CD8-positive, alpha-beta T cell (primary cell): ENCODE measurements at regions of chr19 and their contacts with region 1.

Region 1: GRCh38 chr19:16088351-16089009 is 12.2 kb downstream of the TPM4 start:
- DNase-seq: no peak
- ATAC-seq: no peak
- H3K4me3 ChIP-seq: no peak overlapping the region
- H3K4me3 Mint-ChIP-seq: no peak overlapping the region
- H3K27ac ChIP-seq: no peak overlapping the region
- H3K27ac Mint-ChIP-seq: no peak overlapping the region
- H3K4me1 ChIP-seq: peaks cover 26% of the 10 kb centered on the region
- H3K4me1 Mint-ChIP-seq: peaks cover 30% of the 10 kb centered on the region
- H3K27me3 ChIP-seq: no peaks in the 10 kb centered on the region
- H3K27me3 Mint-ChIP-seq: no peaks in the 10 kb centered on the region
- CTCF ChIP-seq: no peak

Region 2: DNA sequence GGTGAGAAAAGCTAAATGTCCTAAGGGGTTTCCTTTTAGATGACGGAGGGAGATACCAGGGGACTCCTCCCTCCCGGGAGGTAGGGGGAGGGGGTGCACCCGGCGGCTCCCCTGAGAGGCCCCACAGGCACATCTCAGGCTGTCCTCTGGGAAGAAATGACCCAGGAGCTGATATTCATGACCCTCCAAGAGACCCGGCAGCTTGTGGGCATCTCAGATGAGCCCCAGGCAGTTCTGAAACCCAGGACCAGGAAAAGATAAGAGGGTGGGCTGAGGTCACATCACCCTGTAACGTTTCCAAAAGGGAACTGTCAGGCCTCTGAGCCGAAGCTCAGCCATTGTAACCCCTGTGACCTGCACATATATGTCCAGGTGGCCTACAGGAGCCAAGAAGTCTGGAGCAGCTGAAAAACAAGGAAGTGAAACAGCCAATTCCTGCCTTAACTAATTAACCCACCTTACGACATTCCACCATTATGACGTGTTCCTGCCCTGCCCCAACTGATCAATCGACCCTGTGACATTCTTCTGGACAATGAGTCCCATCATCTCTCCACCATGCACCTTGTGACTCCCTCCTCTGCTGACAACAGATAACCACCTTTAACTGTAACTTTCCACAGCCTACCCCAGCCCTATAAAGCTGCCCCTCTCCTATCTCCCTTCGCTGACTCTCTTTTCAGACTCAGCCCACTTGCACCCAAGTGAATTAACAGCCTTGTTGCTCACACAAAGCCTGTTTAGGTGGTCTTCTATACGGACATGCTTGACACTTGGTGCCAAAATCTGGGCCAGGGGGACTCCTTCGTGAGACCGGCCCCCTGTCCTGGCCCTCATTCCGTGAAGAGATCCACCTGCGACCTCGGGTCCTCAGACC is 259.8 kb before region 1 on chr19:
- CTCF ChIA-PET with region 1: no interaction called
- POLR2A ChIA-PET with region 1: no interaction called
- intact Hi-C with region 1: no loop called
- DNase-seq: no peak
- ATAC-seq: no peak
- H3K4me3 ChIP-seq: no peak overlapping the region
- H3K4me3 Mint-ChIP-seq: no peak overlapping the region
- H3K27ac ChIP-seq: no peak overlapping the region
- H3K27ac Mint-ChIP-seq: no peak overlapping the region
- H3K4me1 ChIP-seq: no peaks in the 10 kb centered on the region
- H3K4me1 Mint-ChIP-seq: no peaks in the 10 kb centered on the region
- H3K27me3 ChIP-seq: no peaks in the 10 kb centered on the region
- H3K27me3 Mint-ChIP-seq: no peaks in the 10 kb centered on the region
- CTCF ChIP-seq: no peak

Region 3: DNA sequence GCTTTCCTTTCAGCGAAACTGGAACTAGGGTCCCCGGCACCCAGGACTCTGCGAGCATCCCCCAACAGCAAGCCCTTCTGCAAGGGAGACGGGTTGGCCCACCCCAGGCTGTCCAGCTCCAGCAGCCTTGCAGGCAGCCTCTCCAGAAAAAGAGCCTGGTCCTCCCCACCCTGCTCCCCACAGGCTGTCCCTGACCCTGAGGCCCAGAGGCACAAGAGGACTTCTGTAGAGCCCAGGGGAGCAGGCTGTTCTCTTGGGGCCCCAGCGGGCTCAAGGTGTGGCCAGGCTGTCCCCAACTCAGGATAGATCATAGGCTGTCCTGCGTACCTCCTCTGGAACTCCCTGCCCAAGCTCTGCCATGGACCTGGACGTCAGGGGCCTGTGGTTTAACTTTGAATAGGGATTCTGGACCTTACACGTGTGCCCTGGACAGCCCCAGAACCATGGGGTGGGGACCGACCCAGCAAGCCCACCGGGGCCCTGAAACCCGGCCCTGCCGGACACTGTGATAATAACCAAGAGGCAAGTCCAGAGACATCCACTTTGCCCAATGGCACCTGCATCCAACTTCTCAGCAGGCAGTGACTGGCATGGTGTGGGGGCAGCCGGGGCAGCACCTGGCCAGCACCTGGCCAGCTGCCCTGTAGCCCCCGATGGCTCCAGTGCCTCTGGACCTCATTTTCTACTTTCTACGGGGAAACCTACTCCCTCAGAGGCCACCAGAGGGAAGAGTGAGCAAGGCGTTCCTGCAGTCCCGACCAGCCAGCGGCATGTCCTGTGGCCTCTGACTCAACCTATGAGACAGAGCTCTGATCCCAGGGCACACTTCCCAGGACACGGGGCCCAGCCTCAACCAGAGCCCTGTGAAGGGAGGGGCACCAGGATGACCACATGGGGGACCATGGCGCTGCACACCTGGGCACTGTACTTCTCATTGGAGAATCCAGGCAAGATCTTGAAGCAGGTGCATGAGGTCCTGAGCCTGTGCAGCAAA is 63.1 kb before region 1 on chr19:
- CTCF ChIA-PET with region 1: no interaction called
- POLR2A ChIA-PET with region 1: no interaction called
- intact Hi-C with region 1: no loop called
- DNase-seq: peak in 2 of 9 experiments; percentile 22 to 24
- ATAC-seq: no peak
- H3K4me3 ChIP-seq: no peak overlapping the region
- H3K4me3 Mint-ChIP-seq: no peak overlapping the region
- H3K27ac ChIP-seq: no peak overlapping the region
- H3K27ac Mint-ChIP-seq: no peak overlapping the region
- H3K4me1 ChIP-seq: no peaks in the 10 kb centered on the region
- H3K4me1 Mint-ChIP-seq: no peaks in the 10 kb centered on the region
- H3K27me3 ChIP-seq: no peaks in the 10 kb centered on the region
- H3K27me3 Mint-ChIP-seq: no peaks in the 10 kb centered on the region
- CTCF ChIP-seq: no peak

Region 4: DNA sequence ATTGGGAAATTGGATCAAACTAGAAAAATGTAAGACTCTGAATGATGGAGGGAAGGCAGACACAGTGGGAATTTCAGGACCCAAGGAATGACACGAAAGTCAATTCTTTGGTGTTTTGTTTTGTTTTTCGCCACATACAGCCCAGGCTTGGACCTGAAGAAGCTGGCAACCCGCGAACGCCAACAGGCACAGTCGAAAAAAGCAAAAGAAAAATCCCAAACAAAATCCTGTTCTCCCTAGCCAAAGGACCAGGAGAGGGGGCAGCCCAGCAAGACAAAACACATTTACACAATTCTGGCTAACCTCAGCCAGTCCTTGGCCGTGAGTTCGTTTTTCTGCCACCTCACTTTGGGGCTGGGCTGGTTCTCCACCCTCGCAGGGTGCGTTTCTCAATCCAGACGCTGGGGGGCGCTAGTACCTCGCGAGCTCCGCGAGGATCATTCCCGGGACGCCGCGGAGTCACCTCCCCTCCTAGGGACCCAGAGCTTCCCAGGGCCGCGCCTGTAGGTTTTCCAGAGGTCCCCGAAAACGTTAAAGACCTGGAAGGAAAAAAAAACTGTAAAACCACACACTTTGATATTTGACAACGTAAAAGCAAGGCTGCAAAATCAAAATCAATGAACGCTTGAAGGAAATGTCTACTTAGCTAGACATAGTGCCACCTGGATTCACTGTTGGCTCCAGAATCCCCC is 47.0 kb before region 1 on chr19:
- CTCF ChIA-PET with region 1: interaction called, 16 read pairs
- POLR2A ChIA-PET with region 1: no interaction called
- intact Hi-C with region 1: loop called in 1 of 2 experiments (anchors 1 kb)
- DNase-seq: peak; percentile 50 to 86 (median 76)
- ATAC-seq: peak; percentile 91
- H3K4me3 ChIP-seq: no peak overlapping the region
- H3K4me3 Mint-ChIP-seq: peak overlapping the region; percentile 11
- H3K27ac ChIP-seq: no peak overlapping the region
- H3K27ac Mint-ChIP-seq: no peak overlapping the region
- H3K4me1 ChIP-seq: peaks cover 8% of the 10 kb centered on the region
- H3K4me1 Mint-ChIP-seq: peaks cover 16% of the 10 kb centered on the region
- H3K27me3 ChIP-seq: no peaks in the 10 kb centered on the region
- H3K27me3 Mint-ChIP-seq: no peaks in the 10 kb centered on the region
- CTCF ChIP-seq: peak; percentile 96

Region 5: GRCh38 chr19:16062789-16063188 is 25.7 kb before region 1 on chr19:
- CTCF ChIA-PET with region 1: interaction called, 20 read pairs
- POLR2A ChIA-PET with region 1: no interaction called
- intact Hi-C with region 1: no loop called
- DNase-seq: peak; percentile 51 to 78 (median 66)
- ATAC-seq: peak; percentile 86
- H3K4me3 ChIP-seq: no peak overlapping the region
- H3K4me3 Mint-ChIP-seq: no peak overlapping the region
- H3K27ac ChIP-seq: no peak overlapping the region
- H3K27ac Mint-ChIP-seq: no peak overlapping the region
- H3K4me1 ChIP-seq: peaks cover 26% of the 10 kb centered on the region
- H3K4me1 Mint-ChIP-seq: peaks cover 16% of the 10 kb centered on the region
- H3K27me3 ChIP-seq: no peaks in the 10 kb centered on the region
- H3K27me3 Mint-ChIP-seq: no peaks in the 10 kb centered on the region
- CTCF ChIP-seq: peak; percentile 85

Region 6: GRCh38 chr19:16070366-16070990 is 18.0 kb before region 1 on chr19:
- CTCF ChIA-PET with region 1: interaction called, 80 read pairs
- POLR2A ChIA-PET with region 1: interaction called, 21 read pairs
- intact Hi-C with region 1: loop called (anchors 1 kb)
- DNase-seq: peak; percentile 67 to 96 (median 88)
- ATAC-seq: peak; percentile 91
- H3K4me3 ChIP-seq: peak overlapping the region; percentile 38 to 47
- H3K4me3 Mint-ChIP-seq: peak overlapping the region; percentile 78
- H3K27ac ChIP-seq: peak overlapping the region; percentile 82 to 97
- H3K27ac Mint-ChIP-seq: no peak overlapping the region
- H3K4me1 ChIP-seq: peaks cover 63% of the 10 kb centered on the region
- H3K4me1 Mint-ChIP-seq: peaks cover 40% of the 10 kb centered on the region
- H3K27me3 ChIP-seq: no peaks in the 10 kb centered on the region
- H3K27me3 Mint-ChIP-seq: no peaks in the 10 kb centered on the region
- CTCF ChIP-seq: peak; percentile 38

Region 7: DNA sequence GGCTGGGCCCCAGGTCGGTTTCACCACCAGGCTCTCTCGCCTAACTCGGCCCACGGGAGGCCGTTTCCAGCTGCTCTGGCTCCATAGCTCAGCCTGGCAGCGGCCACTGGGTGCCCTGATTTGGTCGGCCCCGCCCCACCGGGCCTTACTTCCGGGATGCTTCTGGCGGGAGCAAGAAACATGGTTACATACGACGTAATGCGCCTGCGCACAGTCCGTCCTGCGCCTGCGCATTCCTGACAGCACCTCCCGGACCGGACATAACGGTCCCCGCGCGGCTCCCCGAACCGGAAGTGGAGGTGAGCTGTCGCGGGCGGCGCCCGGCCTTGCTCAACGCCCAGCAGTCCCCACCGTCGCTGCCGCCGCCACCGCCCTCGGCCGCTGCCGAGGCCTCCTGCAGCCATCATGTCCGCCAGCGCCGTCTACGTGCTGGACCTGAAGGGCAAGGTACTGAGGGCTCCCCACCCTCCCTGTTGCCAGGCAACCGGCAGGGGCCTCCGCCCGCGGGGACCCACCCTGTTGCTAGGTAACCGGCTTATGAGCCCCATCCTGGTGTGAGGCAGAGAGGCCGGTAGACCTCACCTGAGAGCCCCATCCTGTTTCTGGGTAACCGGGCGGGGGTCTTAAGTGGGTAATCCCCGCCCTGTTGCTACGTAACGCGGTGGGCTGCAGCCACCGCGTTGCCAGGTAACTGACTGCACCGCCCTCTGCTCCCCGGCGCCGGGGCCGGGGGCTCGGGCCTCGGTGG is 109.3 kb after region 1 on chr19 and contains the start of gene AP1M1:
- CTCF ChIA-PET with region 1: no interaction called
- POLR2A ChIA-PET with region 1: no interaction called
- intact Hi-C with region 1: no loop called
- DNase-seq: peak; percentile 95 to 99 (median 98)
- ATAC-seq: peak; percentile 82
- H3K4me3 ChIP-seq: peak within 1 kb of the TSS; percentile 98 to 99
- H3K4me3 Mint-ChIP-seq: peak within 1 kb of the TSS; percentile 93
- H3K27ac ChIP-seq: peak within 1 kb of the TSS; percentile 87 to 98
- H3K27ac Mint-ChIP-seq: peak within 1 kb of the TSS; percentile 97
- H3K4me1 ChIP-seq: peaks cover 54% of the 10 kb centered on the region
- H3K4me1 Mint-ChIP-seq: peaks cover 49% of the 10 kb centered on the region
- H3K27me3 ChIP-seq: no peaks in the 10 kb centered on the region
- H3K27me3 Mint-ChIP-seq: no peaks in the 10 kb centered on the region
- CTCF ChIP-seq: no peak
- total RNA-seq, gene AP1M1: 76.2 to 83.4 TPM